GM23248 (cell line): ENCODE measurements at regions of chr16 and their contacts with region 1.

Region 1: DNA sequence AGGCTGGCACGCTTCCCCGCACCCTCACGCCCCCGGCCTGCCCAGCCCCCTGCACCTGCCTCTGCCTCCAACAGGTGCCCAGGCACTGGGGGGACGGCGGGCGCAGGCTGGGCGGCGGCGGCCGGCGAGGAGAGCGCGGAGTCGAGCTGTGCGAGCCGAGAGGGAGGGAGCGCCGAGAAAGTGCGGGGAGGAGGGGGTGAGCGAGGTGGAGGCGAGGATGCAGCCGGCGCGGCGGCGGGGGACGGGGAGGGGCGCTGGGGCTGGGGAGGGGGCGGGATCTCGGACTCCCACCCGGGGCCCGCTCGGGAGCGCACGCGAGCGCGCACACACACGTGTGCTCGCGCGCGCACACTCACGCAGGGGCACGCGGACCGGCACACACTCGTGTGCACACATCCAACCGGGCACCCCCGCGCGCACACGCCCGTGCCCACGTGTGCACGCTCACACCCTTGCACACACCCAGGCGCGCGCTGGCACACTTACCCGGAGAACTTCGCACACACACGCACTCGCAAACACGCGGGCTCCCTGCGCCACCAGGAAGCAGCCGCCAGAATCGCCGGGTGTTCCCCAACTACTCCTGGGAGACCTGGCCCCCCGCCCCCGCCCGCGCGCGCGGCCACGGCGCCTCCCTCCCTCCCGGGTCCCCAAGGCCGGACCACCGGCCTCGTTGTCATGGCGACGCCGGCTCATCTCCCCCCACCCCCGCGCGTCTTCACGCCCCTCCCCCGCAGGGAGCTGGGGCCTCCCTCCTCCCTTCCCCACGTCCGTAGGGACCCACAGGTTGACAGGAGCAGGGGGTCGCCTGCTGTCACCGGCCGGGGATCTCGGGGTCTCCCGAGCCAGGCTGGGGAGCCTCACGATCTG is at the start of gene DOC2A:
- DNase-seq: peak; percentile 43
- H3K4me3 ChIP-seq: peak within 1 kb of the TSS; percentile 50
- H3K27ac ChIP-seq: no peak within 1 kb of the TSS
- H3K4me1 ChIP-seq: no peaks in the 10 kb centered on the region
- H3K27me3 ChIP-seq: peaks cover 15% of the 10 kb centered on the region; the same call in 1 of the 2 replicates
- total RNA-seq, gene DOC2A: not detected in 2 replicates

Region 2: GRCh38 chr16:29784901-29785500 is 226.1 kb before region 1 on chr16:
- in situ Hi-C with region 1: no loop called
- DNase-seq: peak; percentile 86
- H3K4me3 ChIP-seq: peak overlapping the region; percentile 70
- H3K27ac ChIP-seq: no peak overlapping the region
- H3K4me1 ChIP-seq: peaks cover 3% of the 10 kb centered on the region; the same call in 1 of the 2 replicates
- H3K27me3 ChIP-seq: 0 out of 2 replicates have a peak, but pooled peaks cover under 1% of the 10 kb centered on the region

Region 3: DNA sequence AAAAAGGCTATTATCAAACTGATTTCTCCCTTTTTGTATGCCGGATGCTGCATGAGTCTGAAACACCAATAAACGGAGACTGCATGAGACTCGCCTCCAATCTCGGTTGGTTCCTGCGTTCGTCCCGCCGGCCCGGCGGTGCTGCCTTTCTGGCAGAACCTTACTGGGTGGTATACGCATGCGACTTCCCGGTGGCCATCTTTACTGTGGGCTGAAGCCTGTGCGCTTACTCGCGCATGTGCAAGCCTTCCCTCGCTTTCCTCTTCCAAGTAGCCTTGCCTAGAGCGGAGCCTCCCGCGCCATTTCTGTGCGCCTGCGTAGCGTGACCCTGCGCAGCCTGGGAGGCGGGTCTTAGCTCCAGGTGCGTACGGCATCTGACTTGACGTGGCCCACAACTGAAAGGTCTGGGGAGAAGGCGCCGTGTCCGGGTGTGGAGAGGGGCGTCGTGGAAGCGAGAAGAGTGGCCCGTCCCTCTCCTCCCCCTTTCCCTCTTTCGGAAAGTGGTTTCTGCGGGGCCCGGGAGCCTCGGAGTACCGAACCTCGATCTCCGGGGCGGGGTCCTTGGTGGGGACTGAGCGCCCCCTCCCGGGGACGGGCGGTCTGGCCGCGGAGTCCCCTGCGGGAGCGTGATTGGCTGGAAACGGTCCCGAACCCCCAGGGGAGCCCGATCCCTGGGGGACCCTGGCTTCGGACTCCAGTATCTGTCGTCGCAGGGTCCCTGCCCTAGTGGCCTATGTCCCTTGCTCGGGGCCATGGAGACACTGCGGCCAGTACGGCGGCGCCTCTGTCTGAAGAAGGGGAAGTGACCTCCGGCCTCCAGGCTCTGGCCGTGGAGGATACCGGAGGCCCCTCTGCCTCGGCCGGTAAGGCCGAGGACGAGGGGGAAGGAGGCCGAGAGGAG is 195.0 kb before region 1 on chr16 and contains the start of gene PAGR1:
- in situ Hi-C with region 1: loop called (anchors 10 kb)
- DNase-seq: peak; percentile 100
- H3K4me3 ChIP-seq: peak within 1 kb of the TSS; percentile 85
- H3K27ac ChIP-seq: peak within 1 kb of the TSS; percentile 70
- H3K4me1 ChIP-seq: peaks cover 16% of the 10 kb centered on the region; the same call in 1 of the 2 replicates
- H3K27me3 ChIP-seq: no peaks in the 10 kb centered on the region
- total RNA-seq, gene PAGR1: 23.6 and 30.6 TPM in 2 replicates

Region 4: GRCh38 chr16:29891525-29892457 is 119.3 kb before region 1 on chr16:
- in situ Hi-C with region 1: no loop called
- DNase-seq: no peak
- H3K4me3 ChIP-seq: no peak overlapping the region
- H3K27ac ChIP-seq: no peak overlapping the region
- H3K4me1 ChIP-seq: no peaks in the 10 kb centered on the region
- H3K27me3 ChIP-seq: no peaks in the 10 kb centered on the region

Region 5: GRCh38 chr16:30761928-30762810 is 751.1 kb after region 1 on chr16 and contains the starts of genes CFAP119 and RNF40:
- in situ Hi-C with region 1: no loop called
- DNase-seq: peak; percentile 99
- H3K4me3 ChIP-seq: peak within 1 kb of the TSS; percentile 79
- H3K27ac ChIP-seq: peak within 1 kb of the TSS; percentile 52
- H3K4me1 ChIP-seq: peaks cover 14% of the 10 kb centered on the region
- H3K27me3 ChIP-seq: no peaks in the 10 kb centered on the region
- total RNA-seq, gene CFAP119: 0.89 and 2.7 TPM in 2 replicates
- total RNA-seq, gene RNF40: 97.9 and 99.0 TPM in 2 replicates